Posterior vena cava (tissue), 2 donors: ENCODE measurements at regions of chr6 and their contacts with region 1.

Region 1: GRCh38 chr6:36979347-36979742 is 6.7 kb downstream of the MTCH1 start:
- DNase-seq: no peak

Region 2: GRCh38 chr6:36285187-36285671 is 694.1 kb before region 1 on chr6:
- intact Hi-C with region 1: no loop called
- DNase-seq: no peak

Region 3: GRCh38 chr6:36929607-36930006 is 49.7 kb before region 1 on chr6:
- intact Hi-C with region 1: loop called in 1 of 2 experiments (anchors 10 kb)
- DNase-seq: no peak

Region 4: GRCh38 chr6:37353761-37354525 is 374.6 kb after region 1 on chr6 and contains the start of gene RNF8:
- intact Hi-C with region 1: no loop called
- DNase-seq: peak; percentile 98
- total RNA-seq, gene RNF8: 13.6 to 14.0 TPM